ENCODE measurements at regions of chr18 and their contacts with region 1.

Region 1: DNA sequence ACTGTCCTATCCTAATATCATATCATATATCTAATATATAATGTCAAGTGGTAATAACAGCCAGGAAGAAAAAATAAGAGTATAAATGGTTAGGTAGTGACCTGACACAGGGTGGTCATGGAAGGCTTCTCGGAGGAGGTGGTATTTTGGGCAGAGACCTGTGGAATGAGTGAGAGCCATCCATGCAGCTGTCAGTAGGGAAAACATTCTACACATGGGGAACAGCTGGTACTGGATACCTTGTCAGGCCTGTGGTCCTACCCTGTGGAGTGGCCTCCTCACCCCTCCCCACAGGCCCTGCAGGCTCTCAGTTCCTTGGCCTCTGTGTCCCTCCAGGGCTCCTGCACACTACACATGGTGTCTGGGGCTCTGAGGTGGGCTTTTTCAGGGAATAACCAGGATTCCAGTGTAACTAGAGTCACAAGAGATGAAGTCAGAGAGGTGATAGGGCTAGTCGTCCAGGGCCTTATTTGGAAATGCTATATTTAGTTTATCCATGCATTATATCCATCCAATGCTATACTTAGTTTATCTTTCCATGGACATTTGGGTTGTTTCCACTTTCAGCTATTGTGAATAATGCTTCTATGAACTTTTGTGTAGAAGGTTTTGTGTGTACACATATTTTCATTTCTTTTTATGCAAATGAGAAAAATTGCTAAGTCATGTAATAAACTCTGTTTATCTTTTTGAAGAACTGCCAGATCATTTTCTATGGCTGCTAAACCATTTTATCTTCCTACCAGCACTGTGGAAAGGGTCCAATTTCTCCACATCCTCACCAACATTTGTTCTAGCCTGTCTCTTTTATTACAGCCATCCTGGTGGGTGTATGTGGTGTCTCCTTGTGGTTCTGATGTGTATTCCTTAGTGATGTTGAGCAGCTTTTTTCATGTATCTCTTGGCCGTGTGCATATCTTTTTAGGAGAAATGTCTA is 75.6 kb downstream of the TPGS2 start:
- DNase-seq: no peak
- ATAC-seq: no peak
- H3K4me3 ChIP-seq: no peak overlapping the region
- H3K4me3 Mint-ChIP-seq: no peak overlapping the region
- H3K27ac ChIP-seq: no peak overlapping the region
- H3K27ac Mint-ChIP-seq: no peak overlapping the region
- H3K4me1 ChIP-seq: no peaks in the 10 kb centered on the region
- H3K4me1 Mint-ChIP-seq: no peaks in the 10 kb centered on the region
- H3K27me3 ChIP-seq: peaks cover 0 to 3% of the 10 kb centered on the region in 2 experiments
- H3K27me3 Mint-ChIP-seq: peaks cover 22% of the 10 kb centered on the region
- CTCF ChIP-seq: no peak

Region 2: GRCh38 chr18:36702401-36703013 is 50.7 kb before region 1 on chr18:
- CTCF ChIA-PET with region 1: no interaction called
- POLR2A ChIA-PET with region 1: no interaction called
- intact Hi-C with region 1: loop called in 1 of 2 experiments (anchors 5 kb)
- DNase-seq: no peak
- ATAC-seq: no peak
- H3K4me3 ChIP-seq: no peak overlapping the region
- H3K4me3 Mint-ChIP-seq: no peak overlapping the region
- H3K27ac ChIP-seq: no peak overlapping the region
- H3K27ac Mint-ChIP-seq: no peak overlapping the region
- H3K4me1 ChIP-seq: no peaks in the 10 kb centered on the region
- H3K4me1 Mint-ChIP-seq: no peaks in the 10 kb centered on the region
- H3K27me3 ChIP-seq: peaks cover 0 to 4% of the 10 kb centered on the region in 2 experiments
- H3K27me3 Mint-ChIP-seq: peaks cover 52% of the 10 kb centered on the region
- CTCF ChIP-seq: no peak

Measured in CD4-positive, alpha-beta T cell (primary cell).